ENCODE measurements at regions of chr2 and their contacts with region 1.

Region 1: DNA sequence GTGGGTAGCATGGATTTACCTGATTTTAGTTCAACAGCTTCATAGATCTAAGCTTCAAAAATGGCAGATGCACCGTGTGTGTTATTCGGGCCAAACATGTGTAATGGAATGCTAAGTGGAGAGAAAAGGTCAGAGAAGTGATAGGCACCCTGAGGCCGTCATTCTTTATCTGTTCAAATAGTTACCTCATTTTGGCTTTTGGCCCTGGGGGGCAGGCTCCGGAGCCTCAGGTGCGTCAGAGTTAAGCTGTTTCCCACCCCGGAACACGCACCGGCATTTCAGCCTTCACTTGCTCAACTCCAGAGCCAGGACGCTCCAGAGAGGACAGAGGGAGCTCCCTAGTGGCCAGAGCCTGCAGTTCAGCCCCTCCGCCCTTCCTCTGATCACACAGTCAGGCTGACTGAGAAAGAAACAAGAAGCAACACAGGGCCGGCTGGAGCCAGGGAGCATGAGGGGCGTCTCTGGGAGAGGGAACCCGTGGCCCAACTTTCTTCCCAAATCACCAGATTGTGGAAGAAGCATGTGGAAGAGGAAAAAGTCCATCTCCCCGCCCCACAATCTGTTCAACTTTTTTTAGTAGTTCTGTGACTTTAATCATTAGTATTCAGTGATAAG is 135.2 kb upstream of the EPC2 start:
- DNase-seq: peak; percentile 80
- H3K4me3 ChIP-seq: peak overlapping the region; percentile 55
- H3K27ac ChIP-seq: peak overlapping the region; percentile 54
- H3K4me1 ChIP-seq: peaks cover 16% of the 10 kb centered on the region
- H3K27me3 ChIP-seq: no peaks in the 10 kb centered on the region
- CTCF ChIP-seq: peak; percentile 93

Region 2: GRCh38 chr2:147937744-147938349 is 571.5 kb before region 1 on chr2:
- intact Hi-C with region 1: loop called (anchors 5 kb)
- DNase-seq: no peak
- H3K4me3 ChIP-seq: no peak overlapping the region
- H3K27ac ChIP-seq: no peak overlapping the region
- H3K4me1 ChIP-seq: peaks cover 7% of the 10 kb centered on the region
- H3K27me3 ChIP-seq: no peaks in the 10 kb centered on the region
- CTCF ChIP-seq: peak; percentile 95

Region 3: GRCh38 chr2:147989809-147990403 is 519.5 kb before region 1 on chr2:
- intact Hi-C with region 1: loop called (anchors 10 kb)
- DNase-seq: no peak
- H3K4me3 ChIP-seq: no peak overlapping the region
- H3K27ac ChIP-seq: no peak overlapping the region
- H3K4me1 ChIP-seq: peaks cover 11% of the 10 kb centered on the region
- H3K27me3 ChIP-seq: no peaks in the 10 kb centered on the region
- CTCF ChIP-seq: peak; percentile 66

Region 4: GRCh38 chr2:148614322-148615049 is 105.1 kb after region 1 on chr2:
- intact Hi-C with region 1: loop called (anchors 5 kb)
- DNase-seq: no peak
- H3K4me3 ChIP-seq: no peak overlapping the region
- H3K27ac ChIP-seq: peak overlapping the region; percentile 69
- H3K4me1 ChIP-seq: peaks cover 38% of the 10 kb centered on the region
- H3K27me3 ChIP-seq: no peaks in the 10 kb centered on the region
- CTCF ChIP-seq: no peak

Measured in left ventricle myocardium inferior (tissue), 1 donor.